AG04449 (cell line): ENCODE measurements at regions of chr3 and their contacts with region 1.

Region 1: GRCh38 chr3:111616417-111617105 is 21.4 kb upstream of the ZBED2 start:
- DNase-seq: no peak
- H3K4me3 ChIP-seq: no peak overlapping the region
- CTCF ChIP-seq: peak; percentile 14

Region 2: DNA sequence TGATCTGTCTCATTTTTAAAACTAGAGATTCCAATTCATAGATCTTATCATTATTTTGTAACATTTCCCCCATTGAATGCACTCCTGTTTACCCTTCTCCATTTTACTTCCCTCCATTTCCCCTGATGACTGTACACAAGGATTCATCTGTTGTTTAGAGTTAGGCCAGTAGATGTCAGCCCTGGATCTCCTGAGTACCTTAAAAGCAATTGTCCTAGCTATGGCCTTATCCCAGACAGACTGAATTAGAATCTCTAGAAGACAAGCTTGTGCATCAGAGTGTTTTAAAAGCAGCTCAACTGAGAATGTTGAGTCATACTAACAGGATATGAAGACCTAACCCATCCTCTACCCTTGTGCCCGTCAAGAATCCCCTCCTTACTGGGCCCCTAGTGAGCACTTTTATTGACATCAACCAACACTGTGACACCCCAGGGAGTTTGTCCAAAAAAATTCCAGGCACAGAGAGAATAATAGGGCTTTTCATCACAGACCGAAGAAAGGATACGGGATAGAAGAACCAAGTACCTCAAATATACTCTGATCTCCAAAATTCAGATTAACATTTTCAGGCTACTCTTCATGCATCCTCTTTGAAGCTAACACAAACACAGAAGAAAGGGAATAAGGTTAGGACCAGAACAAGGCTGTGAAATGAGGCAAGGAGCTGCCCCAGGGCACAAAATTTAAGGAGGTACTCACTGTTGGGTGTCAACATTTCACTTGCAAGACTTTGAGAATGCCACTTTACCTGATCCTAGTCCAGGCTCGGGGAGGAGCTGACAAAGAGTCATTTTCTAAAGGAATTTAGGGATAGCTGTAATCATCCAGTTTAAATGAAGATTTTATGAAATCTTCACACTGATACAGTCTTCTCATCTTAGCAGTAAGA is 38.5 kb before region 1 on chr3:
- CTCF ChIA-PET with region 1: interaction called, 29 read pairs
- POLR2A ChIA-PET with region 1: no interaction called
- DNase-seq: peak; percentile 70
- H3K4me3 ChIP-seq: no peak overlapping the region
- CTCF ChIP-seq: peak; percentile 71

Region 3: DNA sequence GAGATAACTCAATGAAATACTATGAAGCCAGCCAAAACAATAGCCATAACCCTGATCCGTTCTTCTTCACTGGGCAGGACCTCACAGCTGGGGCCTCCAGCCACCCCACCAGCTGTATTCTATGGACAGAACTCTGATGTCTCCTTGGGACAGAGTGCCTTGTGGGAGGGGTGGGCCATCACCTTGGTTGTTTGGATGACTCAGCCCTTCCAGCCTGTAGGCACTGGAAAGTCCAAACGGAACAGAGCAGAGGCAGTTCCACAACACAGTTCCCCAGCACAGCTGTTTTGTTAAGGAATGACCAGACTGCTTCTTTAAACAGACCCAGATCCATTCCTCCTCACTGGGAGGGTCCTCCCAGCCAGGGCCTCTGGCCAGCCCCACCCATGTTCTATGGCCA is 10.5 kb after region 1 on chr3:
- CTCF ChIA-PET with region 1: interaction called, 20 read pairs
- POLR2A ChIA-PET with region 1: no interaction called
- DNase-seq: no peak
- H3K4me3 ChIP-seq: no peak overlapping the region
- CTCF ChIP-seq: no peak

Region 4: GRCh38 chr3:111662012-111662411 is 45.5 kb after region 1 on chr3:
- CTCF ChIA-PET with region 1: no interaction called
- POLR2A ChIA-PET with region 1: no interaction called
- DNase-seq: no peak
- H3K4me3 ChIP-seq: no peak overlapping the region
- CTCF ChIP-seq: no peak

Region 5: DNA sequence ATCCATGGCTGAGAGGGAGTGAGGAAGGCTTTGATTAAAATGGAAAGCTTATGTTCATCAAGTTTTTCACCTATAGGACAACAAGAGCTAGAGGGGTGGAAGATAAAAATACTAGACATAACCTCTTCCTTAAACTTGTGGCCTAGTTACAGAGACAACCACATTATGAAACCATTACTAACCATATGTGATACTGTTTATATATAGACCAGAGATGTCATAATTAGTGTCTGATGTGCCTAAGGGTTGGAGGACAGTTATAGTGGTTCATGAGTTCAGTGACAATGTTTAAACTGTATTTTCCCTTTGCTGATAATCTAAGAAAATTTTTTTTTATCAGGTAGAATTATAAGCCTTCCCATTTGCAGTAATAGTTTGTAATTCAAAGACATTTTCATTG is 266.2 kb after region 1 on chr3:
- CTCF ChIA-PET with region 1: no interaction called
- POLR2A ChIA-PET with region 1: no interaction called
- DNase-seq: no peak
- H3K4me3 ChIP-seq: no peak overlapping the region
- CTCF ChIP-seq: no peak

Region 6: DNA sequence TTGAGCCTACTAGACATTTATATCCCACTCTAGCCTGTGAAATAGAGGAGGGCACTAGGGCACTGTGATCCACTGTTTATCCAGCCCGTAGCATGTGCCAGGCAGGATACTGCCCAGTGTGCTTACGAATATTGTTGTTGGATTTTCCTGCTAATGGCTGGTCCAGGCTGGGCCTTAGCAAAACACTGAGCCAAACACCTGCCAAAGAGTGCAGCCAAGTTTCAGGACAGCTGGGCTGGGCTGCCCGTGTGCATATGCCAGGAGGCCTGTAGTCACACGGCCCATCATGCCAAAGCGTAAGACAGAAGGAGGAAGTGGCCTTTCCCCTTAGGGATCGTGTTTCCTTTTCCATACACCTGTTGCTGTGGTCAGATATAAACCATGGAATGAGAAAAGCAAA is 307.7 kb after region 1 on chr3:
- CTCF ChIA-PET with region 1: no interaction called
- POLR2A ChIA-PET with region 1: no interaction called
- DNase-seq: no peak
- H3K4me3 ChIP-seq: no peak overlapping the region
- CTCF ChIP-seq: no peak

Region 7: DNA sequence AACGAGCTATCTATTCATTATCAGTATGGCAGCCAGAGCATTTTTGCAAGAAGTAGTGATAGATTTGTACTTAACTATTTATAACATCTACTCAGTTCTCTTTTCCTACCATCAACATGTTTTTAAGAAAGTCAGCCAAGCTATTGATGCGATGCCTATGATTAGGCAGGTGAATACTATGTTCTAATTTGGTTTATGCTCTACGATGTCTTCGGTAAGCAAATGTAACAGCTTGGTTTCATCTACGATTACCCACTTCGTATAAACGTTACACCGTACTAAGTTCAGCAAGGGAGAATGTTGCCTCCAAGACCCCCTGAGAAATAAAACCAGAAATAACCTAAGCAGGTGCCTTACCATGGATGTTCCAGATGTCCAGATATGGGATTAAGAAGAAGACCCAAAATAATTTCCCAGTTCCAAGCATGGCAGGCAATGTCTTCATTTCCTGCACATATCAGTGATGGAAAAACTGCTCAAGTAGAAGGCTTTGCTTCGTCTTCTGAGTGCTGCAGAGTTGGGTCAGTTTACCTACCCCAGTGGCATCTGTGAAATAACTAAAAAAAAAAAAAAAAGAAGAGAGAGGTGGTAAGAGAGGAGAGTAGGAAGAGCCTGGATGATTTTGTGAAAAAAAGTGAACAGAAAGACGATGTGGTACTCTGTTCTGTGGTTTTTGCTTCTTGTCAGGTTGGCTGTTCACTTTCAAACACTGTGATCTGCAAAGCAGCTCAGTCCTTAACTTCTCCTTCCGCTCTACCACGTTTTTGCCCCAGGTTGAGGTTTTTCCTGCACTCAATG is 882.6 kb after region 1 on chr3 and contains the start of gene BTLA:
- CTCF ChIA-PET with region 1: no interaction called
- POLR2A ChIA-PET with region 1: no interaction called
- DNase-seq: no peak
- H3K4me3 ChIP-seq: no peak within 1 kb of the TSS
- CTCF ChIP-seq: no peak